Psoas muscle (tissue), 8 donors: ENCODE measurements at regions of chr12 and their contacts with region 1.

Region 1: GRCh38 chr12:52069327-52070184 is at the start of gene ATG101:
- DNase-seq: peak; percentile 89 to 94
- ATAC-seq: peak; percentile 97 to 98 (median 98)
- H3K4me3 ChIP-seq: peak within 1 kb of the TSS; percentile 78
- H3K27ac ChIP-seq: peak within 1 kb of the TSS; percentile 90
- H3K4me1 ChIP-seq: peaks cover 27% of the 10 kb centered on the region
- H3K27me3 ChIP-seq: no peaks in the 10 kb centered on the region
- CTCF ChIP-seq: peak; percentile 54
- total RNA-seq, gene ATG101: 25.1 to 35.3 (median 26.5) TPM

Region 2: DNA sequence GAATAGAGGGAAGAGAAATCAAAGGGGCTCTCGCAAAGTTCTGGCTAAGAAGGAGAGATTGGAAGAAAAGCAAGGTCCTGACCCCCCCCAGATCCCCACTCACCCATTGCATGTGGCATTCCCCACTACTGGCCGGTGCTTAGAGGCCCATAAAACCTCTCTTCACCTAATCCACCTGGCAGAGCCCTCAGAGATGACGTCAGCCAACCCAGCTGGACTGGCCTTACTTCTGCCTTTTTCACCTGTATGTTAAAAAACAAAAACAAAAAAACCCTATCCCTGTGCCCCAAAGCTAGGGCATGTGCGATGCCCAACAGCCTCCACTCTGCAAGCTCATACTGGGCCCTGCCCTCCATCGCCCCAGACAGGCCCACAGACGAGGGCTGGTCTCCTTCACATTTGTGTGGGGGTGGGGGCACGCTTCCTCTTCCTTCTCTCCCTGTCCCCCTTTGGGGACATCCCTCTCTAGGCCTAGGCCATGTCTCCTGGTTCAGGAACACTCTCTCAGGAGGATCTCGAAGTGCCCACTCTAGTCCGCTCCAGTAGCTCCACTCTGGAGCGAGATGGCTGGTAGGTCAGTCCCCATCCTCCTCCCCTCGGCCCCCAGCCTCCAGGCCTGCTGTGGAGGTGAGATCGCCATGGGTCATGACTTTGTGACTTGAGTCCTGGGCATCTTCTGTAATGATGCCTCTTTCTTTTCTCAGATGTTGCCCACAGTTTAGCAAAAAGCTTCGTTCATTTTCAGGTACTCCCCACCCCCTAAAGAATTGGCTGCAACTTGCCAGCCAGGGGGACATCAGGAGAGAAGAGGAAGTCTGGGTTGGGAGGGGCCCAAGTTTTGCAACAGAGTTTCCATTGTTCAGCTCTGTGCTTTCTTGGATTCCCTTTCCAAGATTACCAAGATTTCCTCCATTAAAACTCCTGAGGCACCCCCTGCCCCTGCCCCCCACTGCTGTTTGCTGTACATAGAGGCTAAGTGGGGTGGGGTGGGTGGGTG is 258.1 kb before region 1 on chr12:
- intact Hi-C with region 1: no loop called
- DNase-seq: no peak
- ATAC-seq: no peak
- H3K4me3 ChIP-seq: no peak overlapping the region
- H3K27ac ChIP-seq: no peak overlapping the region
- H3K4me1 ChIP-seq: no peaks in the 10 kb centered on the region
- H3K27me3 ChIP-seq: peaks cover 0 to 21% (median 11%) of the 10 kb centered on the region in 3 donors
- CTCF ChIP-seq: no peak

Region 3: DNA sequence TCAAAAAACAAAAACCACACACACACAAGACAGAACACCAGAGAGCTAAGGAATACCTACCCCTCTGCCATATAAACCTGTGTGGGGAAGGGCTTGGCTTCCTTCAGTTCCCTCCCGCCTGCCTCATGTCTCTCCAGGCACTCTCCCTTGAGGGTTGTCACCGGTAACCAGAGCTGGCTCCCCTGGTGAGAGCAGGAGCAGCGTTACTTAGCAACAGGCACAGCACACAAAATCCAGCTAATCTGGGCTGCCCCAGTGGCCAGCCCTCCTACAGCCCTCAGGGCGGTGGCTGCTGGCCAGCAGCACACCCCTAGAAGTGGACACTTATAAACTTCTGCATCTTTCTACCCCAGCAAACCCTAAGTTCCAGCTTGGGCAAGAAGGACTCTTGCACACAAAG is 39.9 kb before region 1 on chr12:
- intact Hi-C with region 1: loop called in 1 of 2 experiments (anchors 5 kb)
- DNase-seq: peak in 1 of 2 donors; percentile 78
- ATAC-seq: peak in 1 of 4 donors; percentile 18
- H3K4me3 ChIP-seq: no peak overlapping the region
- H3K27ac ChIP-seq: peak overlapping the region; percentile 48
- H3K4me1 ChIP-seq: peaks cover 57% of the 10 kb centered on the region
- H3K27me3 ChIP-seq: no peaks in the 10 kb centered on the region
- CTCF ChIP-seq: no peak

Region 4: DNA sequence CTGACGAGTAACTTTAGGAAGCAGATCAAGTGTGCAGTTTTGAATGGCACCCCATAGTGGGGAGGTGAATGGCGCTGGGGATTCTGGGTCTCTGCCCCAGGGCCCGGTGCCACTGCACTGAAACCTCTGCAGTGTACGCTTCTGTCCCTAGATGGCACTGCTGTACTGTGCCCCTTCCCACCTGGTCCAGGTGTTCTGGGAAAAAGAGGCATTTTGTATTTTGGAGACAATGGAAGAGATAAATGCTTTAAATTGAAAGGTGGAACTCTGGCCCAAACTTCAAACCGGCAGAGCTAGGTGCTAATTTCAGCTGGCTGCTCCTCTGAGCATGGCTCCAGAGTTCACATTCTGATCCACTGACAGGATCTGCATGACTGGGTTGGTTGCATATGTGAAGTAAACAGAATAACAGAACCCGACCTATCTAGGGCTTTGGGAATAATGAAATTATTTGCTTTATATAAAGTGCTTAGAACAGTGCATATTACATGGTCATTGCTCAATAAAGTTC is 70.1 kb after region 1 on chr12:
- intact Hi-C with region 1: no loop called
- DNase-seq: no peak
- ATAC-seq: peak; percentile 57 to 81 (median 69)
- H3K4me3 ChIP-seq: no peak overlapping the region
- H3K27ac ChIP-seq: no peak overlapping the region
- H3K4me1 ChIP-seq: no peaks in the 10 kb centered on the region
- H3K27me3 ChIP-seq: no peaks in the 10 kb centered on the region
- CTCF ChIP-seq: peak; percentile 55